ENCODE measurements at regions of chr22 and their contacts with region 1.

Region 1: GRCh38 chr22:35299673-35300497 is at the start of gene TOM1:
- DNase-seq: peak; percentile 98
- H3K4me3 ChIP-seq: peak within 1 kb of the TSS; percentile 86
- H3K27ac ChIP-seq: peak within 1 kb of the TSS; percentile 94
- H3K27me3 ChIP-seq: no peaks in the 10 kb centered on the region
- CTCF ChIP-seq: no peak
- polyA plus RNA-seq, gene TOM1: 40.0 and 57.2 TPM in 2 replicates

Region 2: GRCh38 chr22:35330258-35330861 is 30.5 kb after region 1 on chr22:
- CTCF ChIA-PET with region 1: no interaction called
- POLR2A ChIA-PET with region 1: interaction called, 11 read pairs
- DNase-seq: peak; percentile 45
- H3K4me3 ChIP-seq: no peak overlapping the region
- H3K27ac ChIP-seq: peak overlapping the region; percentile 83
- H3K27me3 ChIP-seq: no peaks in the 10 kb centered on the region
- CTCF ChIP-seq: no peak

Region 3: GRCh38 chr22:35344956-35345690 is 45.2 kb after region 1 on chr22:
- CTCF ChIA-PET with region 1: no interaction called
- POLR2A ChIA-PET with region 1: no interaction called
- DNase-seq: no peak
- H3K4me3 ChIP-seq: no peak overlapping the region
- H3K27ac ChIP-seq: no peak overlapping the region
- H3K27me3 ChIP-seq: no peaks in the 10 kb centered on the region
- CTCF ChIP-seq: no peak